ENCODE measurements at regions of chr16 and their contacts with region 1.

Region 1: DNA sequence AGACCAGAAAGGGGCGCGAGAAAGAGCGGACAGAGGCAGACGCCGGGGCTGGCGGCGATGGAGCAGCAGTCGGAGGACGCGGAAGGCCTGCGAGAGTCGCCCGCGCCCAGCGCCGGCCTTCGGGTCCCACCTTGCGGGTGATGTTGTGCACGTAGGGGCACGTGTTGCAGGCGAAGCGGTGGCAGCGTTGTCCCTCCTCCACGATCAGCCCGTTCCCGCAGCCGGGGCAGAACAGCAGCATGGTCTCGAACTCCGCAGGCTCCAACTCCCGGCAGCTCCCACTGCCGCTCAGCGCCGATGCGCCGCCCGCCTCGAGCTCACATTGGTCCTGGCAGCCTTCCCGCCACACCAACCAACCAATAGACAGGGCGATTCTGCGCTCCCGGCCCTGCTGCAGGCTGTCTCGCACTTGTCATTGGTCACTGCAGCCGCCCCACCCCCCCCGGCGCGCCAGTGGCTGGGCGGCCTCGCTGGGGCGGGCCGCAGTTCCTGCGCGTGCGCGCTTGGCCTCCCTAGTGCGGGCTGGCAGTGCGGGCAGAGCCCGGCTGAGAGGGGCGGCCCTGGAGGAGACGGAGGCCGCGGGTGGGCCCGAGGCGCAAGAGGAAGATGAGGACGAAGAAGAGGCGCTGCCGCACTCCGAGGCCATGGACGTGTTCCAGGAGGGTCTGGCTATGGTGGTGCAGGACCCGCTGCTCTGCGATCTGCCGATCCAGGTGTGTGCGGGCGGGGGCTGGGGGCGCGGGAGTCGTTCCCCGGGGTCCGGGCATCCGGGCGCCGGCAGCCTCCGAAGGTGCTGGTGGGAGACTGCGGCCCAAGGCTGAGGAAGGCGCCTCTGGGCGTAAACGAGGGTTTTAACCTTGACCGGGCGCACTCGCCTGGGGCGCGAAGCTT is at the starts of genes POLR3K and SNRNP25:
- DNase-seq: peak; percentile 98

Region 2: GRCh38 chr16:38939-39892 is 14.4 kb before region 1 on chr16:
- CTCF ChIA-PET with region 1: no interaction called
- POLR2A ChIA-PET with region 1: interaction called, 13 read pairs
- DNase-seq: no peak

Region 3: GRCh38 chr16:65671-66137 is 12.1 kb after region 1 on chr16:
- CTCF ChIA-PET with region 1: interaction called, 5 read pairs
- POLR2A ChIA-PET with region 1: interaction called, 31 read pairs
- DNase-seq: peak; percentile 85

Region 4: DNA sequence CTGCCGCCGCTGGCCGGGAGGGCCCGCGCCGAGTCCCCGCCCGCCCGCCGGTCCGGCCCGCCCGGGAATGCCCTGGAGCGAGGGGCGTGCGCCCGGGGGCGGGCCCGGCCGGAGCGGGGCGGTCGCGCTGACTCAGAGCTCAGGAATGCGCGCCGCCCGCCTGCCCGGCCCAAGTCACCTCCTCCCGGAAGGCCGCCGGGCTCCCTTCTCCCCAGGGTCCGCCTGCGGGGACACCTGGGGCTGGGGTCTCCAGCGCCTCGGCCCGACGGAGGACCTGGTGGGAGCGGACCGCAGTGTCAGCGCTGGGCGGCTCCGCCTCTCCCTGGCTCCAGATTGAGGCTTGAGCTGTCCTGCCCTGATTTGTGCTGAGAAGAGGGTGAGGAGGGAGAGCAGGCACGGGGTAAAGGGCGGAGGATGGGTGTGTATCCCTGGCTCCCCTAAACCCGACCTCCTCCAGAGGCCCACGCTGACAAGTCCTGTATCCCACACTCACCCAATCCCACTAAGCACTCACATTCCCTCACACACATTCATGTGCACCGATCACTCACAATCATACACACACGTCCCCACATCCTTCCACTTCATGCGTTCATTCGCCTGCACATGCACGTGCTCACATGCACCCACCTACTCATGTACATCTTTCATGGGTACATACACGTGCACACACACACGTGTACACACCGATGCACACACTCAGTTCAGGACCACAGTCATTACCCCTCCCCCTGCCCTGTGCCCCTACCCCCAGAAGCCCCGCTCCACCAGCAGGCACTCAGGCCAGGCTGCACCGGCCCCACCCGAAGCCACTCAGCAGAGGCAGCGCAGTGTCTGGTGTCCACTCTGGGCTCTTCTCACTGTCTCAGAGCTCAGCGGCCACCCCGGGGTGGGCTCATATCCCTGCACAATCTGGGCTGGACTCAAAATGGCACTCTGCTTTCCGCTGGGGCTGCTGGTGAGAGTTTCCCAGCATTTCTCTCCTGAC is 19.3 kb after region 1 on chr16 and contains the start of gene RHBDF1:
- CTCF ChIA-PET with region 1: interaction called, 3 read pairs
- POLR2A ChIA-PET with region 1: interaction called, 31 read pairs
- DNase-seq: peak; percentile 68

Measured in HEK293T (cell line).